Activated CD4-positive, alpha-beta T cell treated with anti-CD3 and anti-CD28 coated beads for 36 hours (primary cell): ENCODE measurements at regions of chr5 and their contacts with region 1.

Region 1: DNA sequence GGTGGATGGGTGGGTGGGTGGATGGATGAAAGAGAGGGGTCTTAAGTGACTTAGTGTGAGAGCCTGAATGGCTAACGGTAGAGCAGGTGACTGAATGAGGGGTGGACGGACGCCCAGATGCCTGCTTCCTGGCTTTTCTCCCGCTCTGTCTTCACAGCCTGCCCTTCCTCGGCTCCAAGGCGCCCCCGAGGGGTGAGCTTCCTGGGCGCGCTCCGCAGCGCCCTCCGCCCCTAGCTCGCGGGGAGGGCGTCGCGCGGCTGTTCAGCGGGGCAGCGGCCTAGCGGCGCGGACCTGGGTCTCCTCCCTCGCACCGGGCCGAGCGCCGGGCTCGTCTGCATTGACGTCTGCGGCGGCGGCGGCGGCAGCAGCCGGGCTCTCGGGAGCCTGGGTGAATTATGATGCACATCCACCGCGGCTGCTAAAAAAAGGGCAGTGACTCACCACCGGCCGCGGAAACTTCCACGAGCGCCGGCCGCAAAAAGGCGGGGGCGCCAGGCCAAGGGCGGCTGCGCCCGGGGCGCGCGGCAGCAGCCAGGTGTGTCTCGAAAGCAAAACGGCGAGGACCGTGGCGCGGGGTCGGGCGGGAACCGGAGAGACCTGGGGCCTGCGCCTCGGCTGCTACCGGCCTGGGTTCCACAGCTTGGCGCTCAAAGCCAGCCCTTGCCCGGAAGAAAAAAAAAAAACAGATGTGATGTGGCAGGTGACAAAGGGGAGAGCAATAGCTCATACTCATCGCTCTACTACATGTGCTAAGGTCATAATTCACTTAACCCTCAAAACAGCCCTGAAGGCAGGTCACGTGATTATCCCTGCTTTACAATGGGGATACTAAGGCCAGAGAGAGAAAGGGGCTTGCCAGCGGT is 143.0 kb upstream of the ADRA1B start:
- DNase-seq: peak; percentile 92
- ATAC-seq: peak; percentile 91
- H3K4me3 Mint-ChIP-seq: peak overlapping the region; percentile 30
- H3K27ac Mint-ChIP-seq: peak overlapping the region; percentile 37
- H3K4me1 Mint-ChIP-seq: peaks cover 17% of the 10 kb centered on the region
- H3K27me3 Mint-ChIP-seq: peaks cover 46% of the 10 kb centered on the region

Region 2: DNA sequence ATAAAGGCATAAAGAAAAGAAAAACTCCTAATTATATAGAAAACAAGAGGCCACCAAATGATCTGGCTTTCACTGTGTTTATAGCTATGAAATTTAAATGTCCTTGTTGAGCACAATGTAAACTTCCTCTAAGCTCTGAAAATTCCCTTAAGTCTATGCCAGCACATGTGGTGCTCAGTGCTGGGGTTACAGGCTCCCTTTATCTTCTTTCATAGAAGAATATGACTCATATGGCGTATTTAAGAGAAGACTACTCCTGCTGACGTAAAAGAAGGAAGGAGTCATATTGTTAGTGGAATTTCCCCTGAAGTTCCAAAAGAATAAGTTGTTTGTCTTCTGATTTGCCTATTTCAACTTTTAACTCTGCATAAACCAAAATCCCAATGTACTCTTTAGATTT is 594.3 kb before region 1 on chr5:
- CTCF ChIA-PET with region 1: no interaction called
- POLR2A ChIA-PET with region 1: no interaction called
- intact Hi-C with region 1: loop called in 1 of 2 experiments (anchors 10 kb)
- DNase-seq: peak; percentile 55
- ATAC-seq: peak; percentile 92
- H3K4me3 Mint-ChIP-seq: peak overlapping the region; percentile 46
- H3K27ac Mint-ChIP-seq: peak overlapping the region; percentile 91
- H3K4me1 Mint-ChIP-seq: peaks cover 87% of the 10 kb centered on the region
- H3K27me3 Mint-ChIP-seq: no peaks in the 10 kb centered on the region

Region 3: DNA sequence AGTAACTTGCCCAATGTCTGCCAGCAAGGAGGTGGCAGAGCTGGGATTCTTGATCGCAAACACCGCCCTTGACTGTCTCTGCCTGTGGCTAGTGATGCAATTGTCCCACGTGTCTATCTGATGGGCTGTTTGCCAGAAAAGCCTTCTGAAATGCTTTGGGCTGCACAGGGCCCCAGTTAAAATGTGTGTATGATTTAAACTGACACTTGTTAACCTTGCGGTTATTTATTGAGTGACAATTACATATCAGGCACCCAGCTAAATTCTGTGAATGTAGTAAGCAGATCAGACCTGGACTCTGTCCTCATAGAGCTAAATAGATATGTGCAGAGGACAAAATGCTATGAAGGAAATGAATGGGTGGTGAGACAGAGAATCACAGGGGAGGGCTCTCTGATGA is 431.4 kb before region 1 on chr5:
- CTCF ChIA-PET with region 1: no interaction called
- POLR2A ChIA-PET with region 1: no interaction called
- intact Hi-C with region 1: loop called in 1 of 2 experiments (anchors 5 kb)
- DNase-seq: peak; percentile 53
- ATAC-seq: peak; percentile 41
- H3K4me3 Mint-ChIP-seq: no peak overlapping the region
- H3K27ac Mint-ChIP-seq: peak overlapping the region; percentile 34
- H3K4me1 Mint-ChIP-seq: peaks cover 49% of the 10 kb centered on the region
- H3K27me3 Mint-ChIP-seq: no peaks in the 10 kb centered on the region